Right ventricle myocardium superior (tissue), 1 donor: ENCODE measurements at regions of chr1 and their contacts with region 1.

Region 1: DNA sequence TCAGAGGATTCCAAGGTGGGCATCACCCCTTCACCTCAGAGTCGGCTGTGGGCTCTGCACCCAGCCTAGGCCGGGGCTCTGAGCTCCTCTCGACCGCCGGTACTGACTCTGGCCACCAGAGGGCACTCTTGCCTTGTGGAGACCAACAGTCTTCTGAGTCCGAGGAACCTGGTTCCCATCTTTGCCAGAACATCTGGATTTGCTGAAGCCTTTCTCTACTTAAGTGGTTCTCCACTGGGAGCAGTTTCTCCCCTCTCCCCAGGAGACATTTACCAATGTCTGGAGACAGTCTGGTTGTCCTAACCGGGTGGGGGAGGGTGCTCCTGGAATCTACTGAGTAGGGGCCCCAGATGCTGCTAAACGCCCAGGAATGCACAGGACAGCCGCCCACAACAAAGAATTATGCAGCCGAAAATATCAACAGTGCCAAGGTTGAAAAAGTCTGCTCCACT is 9.4 kb downstream of the ETV3L start:
- DNase-seq: peak; percentile 93
- ATAC-seq: peak; percentile 92

Region 2: DNA sequence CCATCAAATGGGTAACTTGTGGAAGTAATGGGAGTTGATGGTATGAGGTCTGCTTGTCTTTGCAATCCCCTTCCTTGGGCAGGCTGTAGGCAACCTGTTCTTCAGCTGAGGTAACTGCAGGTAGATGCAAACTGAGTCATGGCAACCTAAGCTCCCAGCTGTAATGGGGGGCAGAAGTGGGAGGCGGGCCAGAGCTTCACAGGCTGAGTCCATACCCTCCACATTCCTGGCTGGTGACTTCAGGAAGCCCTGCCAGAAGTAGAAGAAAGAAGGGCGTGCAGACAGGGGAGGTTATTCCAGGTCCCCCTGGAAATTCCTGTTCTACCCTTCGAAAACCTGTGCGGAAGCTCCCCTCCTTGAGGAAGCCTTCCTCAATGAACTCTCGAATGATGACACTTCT is 89.5 kb before region 1 on chr1:
- intact Hi-C with region 1: no loop called
- DNase-seq: no peak
- ATAC-seq: no peak

Region 3: DNA sequence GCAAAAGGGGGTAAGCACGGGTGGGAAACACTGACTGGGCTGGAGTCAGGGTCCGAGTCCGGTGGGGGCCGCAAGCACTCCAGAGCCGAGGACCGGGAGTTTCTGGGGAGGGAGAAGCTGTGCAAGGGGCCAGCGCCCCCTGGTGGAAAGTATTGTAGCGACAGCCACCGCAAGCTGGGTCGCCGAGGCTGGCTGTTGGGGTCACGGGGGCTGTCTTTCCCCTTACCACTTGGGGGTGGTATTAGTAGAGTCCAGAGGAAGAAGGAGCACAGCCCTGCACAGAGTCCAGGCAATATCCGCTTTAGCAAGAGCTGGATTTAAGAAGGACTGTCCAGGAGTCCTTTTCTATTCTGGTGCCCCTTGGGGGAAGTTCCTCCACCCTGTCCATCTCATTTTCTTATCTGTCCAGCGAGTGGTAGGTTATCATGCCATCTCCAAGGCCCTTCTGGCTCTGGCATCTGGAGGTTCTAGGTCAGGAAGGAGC is 65.9 kb after region 1 on chr1:
- intact Hi-C with region 1: loop called (anchors 1 kb)
- DNase-seq: peak; percentile 85
- ATAC-seq: peak; percentile 88